A673 (cell line): ENCODE measurements at regions of chr16 and their contacts with region 1.

Region 1: GRCh38 chr16:78805556-78805955 is 706.1 kb downstream of the WWOX start:
- DNase-seq: no peak
- H3K4me3 ChIP-seq: no peak overlapping the region
- H3K27ac ChIP-seq: no peak overlapping the region
- H3K4me1 ChIP-seq: no peaks in the 10 kb centered on the region
- H3K27me3 ChIP-seq: no peaks in the 10 kb centered on the region
- CTCF ChIP-seq: no peak

Region 2: DNA sequence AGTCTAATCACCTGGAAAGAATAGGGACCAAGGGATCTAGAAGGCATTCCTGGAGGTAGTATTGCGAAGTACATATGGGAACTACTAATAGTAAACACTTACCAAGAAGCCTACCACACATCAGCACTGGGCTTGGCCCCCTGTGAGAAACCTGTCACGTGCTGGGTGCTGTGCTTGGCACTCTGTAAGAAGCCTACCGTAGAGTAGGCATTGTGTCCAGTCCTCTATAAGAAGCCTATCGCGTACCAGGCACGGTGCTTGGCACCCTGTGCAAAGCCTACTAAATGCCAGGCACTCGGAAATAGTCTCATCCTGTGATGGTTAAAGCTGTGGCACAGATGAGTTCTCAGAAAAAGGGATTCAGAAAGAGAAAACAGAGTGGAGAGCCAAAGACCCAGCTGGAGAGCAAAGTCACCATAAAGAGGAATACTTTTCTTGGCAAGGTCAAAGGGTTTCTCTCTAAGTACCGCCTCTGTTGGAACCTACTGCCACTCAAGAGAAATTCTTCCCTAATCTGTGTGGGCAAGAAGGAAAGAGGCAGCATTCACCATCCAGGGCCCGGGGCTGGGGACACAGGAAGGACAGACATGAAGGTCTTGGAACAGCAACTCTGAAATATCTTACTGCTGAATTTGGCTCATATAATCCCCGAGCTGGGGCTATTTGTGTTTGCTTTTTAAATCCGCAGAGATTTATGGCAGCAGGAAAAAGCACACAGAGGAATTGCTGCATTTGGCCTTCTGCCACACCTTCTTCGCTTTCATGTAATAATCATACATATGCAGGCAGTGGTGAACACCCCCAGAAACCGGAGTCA is 935.4 kb before region 1 on chr16:
- CTCF ChIA-PET with region 1: no interaction called
- POLR2A ChIA-PET with region 1: interaction called, 10 read pairs
- intact Hi-C with region 1: no loop called
- DNase-seq: peak; percentile 29
- H3K4me3 ChIP-seq: no peak overlapping the region
- H3K27ac ChIP-seq: no peak overlapping the region
- H3K4me1 ChIP-seq: peaks cover 5% of the 10 kb centered on the region
- H3K27me3 ChIP-seq: no peaks in the 10 kb centered on the region
- CTCF ChIP-seq: no peak